PC-9 (cell line): ENCODE measurements at regions of chr1 and their contacts with region 1.

Region 1: DNA sequence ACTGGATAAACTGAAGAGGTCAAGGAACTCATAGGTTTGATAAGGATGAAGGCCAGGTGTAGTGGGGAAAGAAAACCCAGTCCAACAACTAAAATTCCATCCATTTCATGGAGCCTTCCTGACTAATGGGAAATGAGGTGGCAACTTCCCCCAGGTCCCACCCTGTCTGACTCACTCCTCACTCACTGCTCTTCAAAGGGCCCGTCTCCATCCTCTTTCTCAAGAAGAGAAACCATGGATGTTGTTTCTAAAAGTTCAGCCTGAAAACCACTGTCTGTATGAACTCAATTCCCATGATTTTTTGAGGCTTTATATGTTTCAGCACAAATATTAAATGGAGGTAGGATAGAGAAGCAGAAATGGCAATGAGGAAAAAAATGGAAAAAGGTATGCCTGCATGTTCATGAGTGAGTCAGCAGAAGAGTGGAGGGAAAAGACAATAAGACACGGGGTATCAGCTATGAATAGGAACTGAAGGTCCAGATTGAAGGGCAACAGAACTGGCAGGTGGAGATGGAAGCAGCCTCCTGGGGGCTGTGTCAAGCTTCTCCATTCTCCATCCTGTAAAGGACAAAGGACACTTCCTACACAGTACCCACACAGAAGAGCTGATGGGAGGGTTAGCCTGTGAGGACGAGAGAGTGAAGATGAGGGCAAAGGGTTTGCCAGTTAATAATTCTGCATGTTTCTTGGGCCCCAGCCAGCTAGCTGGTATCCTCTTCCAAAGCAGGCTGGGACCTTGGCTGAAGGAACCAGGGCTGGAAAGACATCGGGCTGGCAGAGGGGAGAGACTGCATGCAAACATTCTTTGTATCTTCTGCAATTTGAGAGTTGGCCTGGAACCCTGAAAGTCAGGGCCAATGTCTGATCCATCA is 5.5 kb upstream of the ELOVL1 start:
- DNase-seq: peak; percentile 68 to 88
- H3K4me3 ChIP-seq: no peak overlapping the region
- H3K27ac ChIP-seq: peak overlapping the region; percentile 85
- H3K4me1 ChIP-seq: peaks cover 52% of the 10 kb centered on the region
- H3K27me3 ChIP-seq: no peaks in the 10 kb centered on the region
- CTCF ChIP-seq: no peak

Region 2: DNA sequence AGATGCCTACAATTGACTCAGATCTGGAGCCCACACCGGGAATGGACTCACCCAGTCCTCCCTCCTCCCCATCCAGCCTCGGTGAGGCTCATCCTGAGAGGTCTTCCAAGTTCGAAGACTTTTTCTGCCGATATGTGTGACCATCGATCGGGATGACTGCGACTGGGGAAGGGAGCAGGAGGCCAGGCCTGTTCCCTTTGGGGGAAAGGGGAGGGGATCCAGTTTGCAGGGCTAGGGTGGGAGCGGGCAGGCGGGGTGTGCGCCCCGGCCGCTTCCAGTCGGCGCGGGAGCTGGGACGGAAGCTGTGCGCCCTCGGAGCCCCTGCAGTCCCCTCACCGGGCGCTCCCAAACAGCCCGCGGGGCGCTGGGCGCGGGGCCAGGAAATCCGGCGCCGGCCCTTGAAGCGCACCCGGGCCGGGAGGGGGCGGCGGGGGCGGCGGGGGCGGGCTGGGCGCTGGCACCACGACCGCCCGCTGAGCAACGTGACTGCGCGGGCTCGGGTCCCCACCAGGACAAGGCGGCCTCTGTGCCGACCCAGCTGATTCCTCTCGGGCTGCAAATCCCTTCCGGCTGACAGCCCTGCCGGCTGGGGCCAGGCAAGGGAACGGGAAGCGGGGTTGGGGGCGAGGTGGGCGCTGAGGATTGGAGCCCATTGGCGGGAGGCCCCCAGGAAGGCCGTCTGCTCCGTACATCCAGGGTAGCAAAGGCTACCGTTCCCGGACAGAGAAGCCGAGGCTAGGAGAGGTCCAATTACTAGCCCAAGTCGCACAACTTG is 305.1 kb before region 1 on chr1:
- CTCF ChIA-PET with region 1: no interaction called
- POLR2A ChIA-PET with region 1: no interaction called
- intact Hi-C with region 1: no loop called
- DNase-seq: peak in 1 of 2 experiments; percentile 17
- H3K4me3 ChIP-seq: no peak overlapping the region
- H3K27ac ChIP-seq: no peak overlapping the region
- H3K4me1 ChIP-seq: 0 out of 2 replicates have a peak, but pooled peaks cover 2% of the 10 kb centered on the region
- H3K27me3 ChIP-seq: no peaks in the 10 kb centered on the region
- CTCF ChIP-seq: no peak

Region 3: DNA sequence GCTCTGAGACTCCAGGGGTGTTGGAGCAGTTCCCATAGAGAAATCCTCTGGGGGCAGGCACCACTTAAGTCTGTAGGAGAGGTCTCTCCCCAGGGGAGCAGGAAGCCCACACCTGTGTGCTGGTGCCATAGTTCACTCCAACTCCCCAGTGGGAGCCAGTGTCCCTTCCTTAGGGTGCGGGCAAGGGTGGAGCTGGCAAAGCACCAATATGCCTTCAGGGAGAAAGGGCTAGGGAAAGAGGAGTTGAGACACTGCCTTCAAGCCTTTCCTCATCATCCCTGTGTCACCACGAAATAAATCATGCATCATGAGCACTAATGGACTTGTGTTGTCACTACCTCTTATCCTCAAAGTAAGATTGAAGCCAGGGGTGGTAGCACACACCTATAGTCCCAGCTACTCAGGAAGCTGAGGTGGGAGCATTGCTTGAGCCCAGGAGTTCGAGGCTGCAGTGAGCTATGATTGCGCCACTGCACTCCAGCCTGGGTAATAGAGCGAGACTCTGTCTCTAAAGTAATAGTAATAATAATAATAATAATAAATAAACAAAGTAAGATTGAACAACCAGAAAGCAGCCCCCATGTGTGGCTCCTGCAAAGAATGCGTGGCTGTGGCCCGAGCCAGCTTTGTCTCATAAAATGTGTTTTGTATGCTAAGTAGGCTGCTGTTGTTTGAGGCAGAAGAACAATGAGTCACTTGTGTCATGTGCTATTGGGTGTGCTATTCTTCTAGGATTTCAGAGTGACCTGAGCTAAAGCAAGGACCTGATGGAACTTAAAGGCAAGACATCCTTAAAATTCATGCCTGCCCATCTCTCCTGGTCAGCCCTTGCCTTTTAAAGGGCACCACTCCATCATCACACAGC is 79.2 kb before region 1 on chr1:
- CTCF ChIA-PET with region 1: no interaction called
- POLR2A ChIA-PET with region 1: no interaction called
- intact Hi-C with region 1: no loop called
- DNase-seq: peak; percentile 72 to 83
- H3K4me3 ChIP-seq: no peak overlapping the region
- H3K27ac ChIP-seq: peak overlapping the region; percentile 73
- H3K4me1 ChIP-seq: peaks cover 49% of the 10 kb centered on the region
- H3K27me3 ChIP-seq: no peaks in the 10 kb centered on the region
- CTCF ChIP-seq: no peak

Region 4: GRCh38 chr1:43389326-43390313 is 16.3 kb after region 1 on chr1 and contains the starts of genes MED8 and SZT2:
- CTCF ChIA-PET with region 1: no interaction called
- POLR2A ChIA-PET with region 1: interaction called, 14 read pairs
- intact Hi-C with region 1: no loop called
- DNase-seq: peak; percentile 92 to 97
- H3K4me3 ChIP-seq: peak within 1 kb of the TSS; percentile 80
- H3K27ac ChIP-seq: peak within 1 kb of the TSS; percentile 82
- H3K4me1 ChIP-seq: peaks cover 22% of the 10 kb centered on the region
- H3K27me3 ChIP-seq: no peaks in the 10 kb centered on the region
- CTCF ChIP-seq: no peak
- total RNA-seq, gene MED8: 54.8 and 56.0 TPM in 2 replicates
- total RNA-seq, gene SZT2: 71.6 and 76.1 TPM in 2 replicates

Region 5: DNA sequence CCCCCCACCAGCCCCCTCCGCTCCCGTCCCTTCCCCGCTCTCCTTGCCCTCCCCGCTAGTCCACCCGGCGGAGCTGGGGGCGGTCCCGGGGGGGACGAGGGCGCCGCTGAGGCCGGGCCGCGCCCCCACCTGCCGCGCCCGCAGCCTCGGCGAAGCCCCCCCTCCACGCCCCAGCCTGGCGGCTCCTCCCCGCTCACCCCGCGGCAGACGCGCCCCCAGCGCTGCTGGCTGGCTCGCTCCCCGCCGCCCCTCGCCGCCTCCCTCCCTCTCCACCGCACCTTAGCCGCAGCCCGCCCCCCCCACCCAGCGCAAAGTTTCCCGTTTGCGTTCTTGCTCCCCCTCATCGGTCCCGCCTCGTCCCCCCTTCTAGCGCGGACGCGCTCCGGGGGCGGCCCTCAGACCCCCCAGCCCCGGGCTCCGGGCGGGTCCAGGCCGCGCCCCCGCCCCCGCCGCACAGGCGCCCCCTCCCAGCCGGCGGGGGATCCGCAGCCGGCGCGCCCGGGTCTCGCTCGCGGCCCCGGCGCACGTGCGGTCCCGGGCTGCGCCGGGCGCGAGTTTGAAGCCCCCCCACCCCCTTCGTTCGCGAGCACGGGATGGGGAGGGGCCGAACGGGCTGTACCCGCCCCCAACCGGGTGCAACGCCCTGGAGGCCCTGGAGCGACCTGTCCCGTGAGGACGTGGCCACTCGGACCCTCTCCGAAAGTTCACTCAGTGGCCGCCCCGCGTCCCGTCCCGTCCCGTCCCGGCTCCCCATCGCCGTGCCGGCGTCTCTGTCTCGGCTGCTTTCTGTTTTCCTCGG is 158.0 kb after region 1 on chr1:
- CTCF ChIA-PET with region 1: no interaction called
- POLR2A ChIA-PET with region 1: no interaction called
- intact Hi-C with region 1: no loop called
- DNase-seq: peak in 1 of 2 experiments; percentile 62
- H3K4me3 ChIP-seq: peak overlapping the region; percentile 97
- H3K27ac ChIP-seq: peak overlapping the region; percentile 38
- H3K4me1 ChIP-seq: peaks cover 60% of the 10 kb centered on the region
- H3K27me3 ChIP-seq: no peaks in the 10 kb centered on the region
- CTCF ChIP-seq: no peak